Posterior vena cava (tissue), 2 donors: ENCODE measurements at regions of chr16 and their contacts with region 1.

Region 1: GRCh38 chr16:56191156-56191815 is at the start of gene GNAO1:
- DNase-seq: peak; percentile 90
- total RNA-seq, gene GNAO1: 21.4 to 39.1 TPM

Region 2: GRCh38 chr16:55480228-55480661 is 711.0 kb before region 1 on chr16:
- intact Hi-C with region 1: loop called in 1 of 2 experiments (anchors 10 kb)
- DNase-seq: peak; percentile 97

Region 3: DNA sequence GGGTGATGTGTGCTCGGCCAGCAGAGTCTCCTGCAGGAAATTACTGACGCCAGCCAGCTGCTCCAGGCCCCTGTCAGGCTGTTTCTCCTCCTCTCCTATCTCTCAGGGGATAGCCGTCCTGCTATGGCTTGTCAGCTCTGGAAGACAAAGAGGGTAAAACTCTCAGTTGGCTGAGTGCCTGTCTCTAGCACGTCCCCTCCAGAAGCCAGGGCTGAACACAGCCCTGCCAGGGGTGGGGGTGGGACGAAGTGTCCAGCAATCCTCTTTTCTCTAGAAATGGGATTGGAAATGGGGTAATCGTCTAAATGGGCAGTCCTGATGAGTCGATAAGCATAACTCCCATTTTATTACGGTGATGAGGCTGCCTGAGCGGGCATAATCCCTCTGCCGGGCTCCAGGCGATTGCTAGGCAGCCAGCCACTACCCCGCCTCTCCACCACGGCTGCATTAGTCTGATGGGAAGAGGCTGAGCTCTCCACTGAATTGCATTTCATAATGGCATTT is 89.1 kb before region 1 on chr16:
- intact Hi-C with region 1: loop called in 1 of 2 experiments (anchors 10 kb)
- DNase-seq: peak; percentile 92

Region 4: DNA sequence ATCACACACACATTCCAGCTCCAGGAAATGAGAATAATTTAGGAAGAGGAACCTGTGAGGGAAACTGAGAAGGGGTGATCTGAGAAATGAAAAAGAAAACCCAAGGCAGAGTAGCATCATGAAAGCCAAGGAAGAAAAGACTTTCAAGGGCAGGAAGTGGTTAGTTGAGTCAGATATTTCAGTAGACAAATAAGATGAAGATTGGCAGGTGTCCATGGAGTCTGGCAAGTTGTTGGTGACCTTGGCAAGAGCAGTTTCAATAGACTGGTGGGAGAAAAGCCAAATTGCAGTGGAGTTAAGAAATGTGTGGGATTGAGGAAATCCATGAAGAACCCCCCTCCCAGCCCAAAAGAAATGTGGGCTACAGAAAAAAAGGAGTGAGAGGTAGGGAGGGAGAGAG is 10.8 kb after region 1 on chr16:
- intact Hi-C with region 1: loop called in 1 of 2 experiments (anchors 1 kb)
- DNase-seq: no peak

Region 5: DNA sequence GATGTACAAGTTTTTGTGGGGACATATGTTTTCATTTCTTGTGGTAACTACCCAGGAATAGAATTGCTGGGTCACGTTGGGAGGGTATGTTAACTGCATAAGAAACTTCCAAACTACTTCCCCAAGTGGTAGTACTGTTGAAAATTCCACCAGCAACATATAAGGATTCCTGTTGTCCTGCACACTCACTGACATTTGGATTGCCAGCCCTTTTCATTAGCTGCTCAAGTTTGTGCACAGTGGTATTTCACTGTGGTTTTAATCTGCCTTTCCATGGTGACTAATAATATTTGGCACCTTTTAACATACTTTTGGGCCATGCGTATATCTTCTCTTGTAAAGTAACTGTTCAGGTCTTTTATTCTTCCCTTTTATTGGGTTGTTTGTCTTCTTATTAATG is 103.3 kb after region 1 on chr16:
- intact Hi-C with region 1: loop called in 1 of 2 experiments (anchors 10 kb)
- DNase-seq: peak; percentile 2